Dorsolateral prefrontal cortex (tissue), 120 donors: ENCODE measurements at regions of chr19 and their contacts with region 1.

Region 1: DNA sequence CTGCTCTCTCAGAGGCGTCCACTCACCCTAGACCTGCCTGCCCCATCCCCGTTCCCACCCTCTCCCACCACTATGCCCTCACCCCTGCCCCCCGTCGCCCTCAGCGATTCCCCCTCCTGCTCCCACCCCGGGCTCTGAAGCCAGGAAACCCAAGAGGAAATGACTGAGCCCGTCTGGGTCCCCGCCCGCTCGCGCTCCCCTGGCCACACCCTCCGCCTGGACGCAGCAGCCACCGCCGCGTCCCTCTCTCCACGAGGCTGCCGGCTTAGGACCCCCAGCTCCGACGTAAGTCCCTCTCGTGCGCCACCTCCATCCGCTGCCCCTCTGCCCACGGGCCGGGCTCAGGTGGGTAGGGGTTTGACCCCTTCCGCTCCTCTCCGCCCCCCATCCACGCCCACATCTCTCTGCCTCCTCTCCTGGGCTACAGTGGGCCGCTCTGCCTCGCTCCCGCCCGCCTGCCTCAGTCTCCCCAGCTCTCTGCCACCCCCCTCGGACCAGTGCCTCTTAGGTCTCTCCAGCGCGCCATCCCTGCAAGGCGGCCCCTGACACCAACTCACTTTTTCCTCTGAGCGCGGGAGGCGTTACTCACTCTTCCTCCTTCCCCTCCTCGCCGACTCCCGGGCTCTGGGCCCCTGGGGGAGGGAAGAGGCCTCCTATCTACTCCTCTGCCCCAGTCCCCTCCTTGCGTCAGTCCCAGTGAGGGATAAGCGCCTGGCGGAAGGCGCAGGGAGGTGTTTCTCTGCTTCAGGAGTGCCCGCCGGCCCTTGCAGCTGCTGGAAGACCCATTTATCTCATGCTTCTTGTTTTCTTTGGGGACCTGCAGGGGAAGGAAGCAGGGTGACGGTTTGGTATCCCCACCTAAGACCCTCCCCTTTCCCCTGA is at the start of gene FXYD5:
- DNase-seq: no peak
- H3K4me3 ChIP-seq: peak within 1 kb of the TSS; percentile 1 to 68 (median 48)
- H3K27ac ChIP-seq: peak within 1 kb of the TSS in 19 of 59 donors; percentile 14 to 76 (median 41)
- H3K27me3 ChIP-seq: peaks cover 0 to 26% (median 7%) of the 10 kb centered on the region in 45 donors
- CTCF ChIP-seq: no peak
- total RNA-seq, gene FXYD5: 5.8 to 36.4 (median 14.0) TPM

Region 2: DNA sequence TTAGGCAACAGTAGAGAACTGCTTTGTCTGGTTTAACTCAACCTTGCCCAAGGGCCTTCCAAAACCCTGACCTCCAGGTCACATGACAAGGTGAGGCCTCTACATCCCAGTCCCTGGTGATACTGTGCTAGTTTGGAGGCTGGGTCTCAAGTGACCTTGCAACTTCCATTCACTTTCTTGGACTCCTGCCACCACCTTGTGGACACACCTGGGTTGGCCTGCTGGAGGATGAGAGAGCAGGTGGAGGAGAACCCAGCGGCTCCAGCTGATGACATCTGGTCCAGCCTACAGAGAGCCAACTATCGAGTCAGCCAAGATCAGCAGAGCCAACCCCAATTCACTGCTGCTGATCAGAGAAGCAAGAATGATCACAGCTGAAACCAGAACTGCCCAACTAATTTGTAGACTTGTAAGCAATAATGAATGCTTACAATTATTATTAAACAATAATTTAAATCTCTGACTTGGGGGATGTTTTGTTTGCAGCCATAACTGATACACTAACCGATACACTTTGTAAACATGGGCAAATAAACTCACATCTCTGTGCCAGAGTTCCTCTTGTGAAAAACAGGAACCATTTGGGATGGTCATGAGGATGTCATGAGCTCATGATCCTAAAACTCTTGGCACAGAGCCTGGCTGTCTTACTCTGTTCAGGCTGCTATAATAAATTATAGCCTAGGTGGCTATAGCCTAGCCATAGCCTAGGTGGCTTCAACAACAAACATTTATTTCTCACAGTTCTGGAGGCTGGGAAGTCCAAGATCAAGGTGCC is 62.3 kb after region 1 on chr19:
- intact Hi-C with region 1: loop called in 1 of 2 experiments (anchors 5 kb)
- DNase-seq: no peak
- H3K4me3 ChIP-seq: no peak overlapping the region
- H3K27ac ChIP-seq: no peak overlapping the region
- H3K27me3 ChIP-seq: no peaks in the 10 kb centered on the region
- CTCF ChIP-seq: no peak